ENCODE measurements at regions of chr6 and their contacts with region 1.

Region 1: DNA sequence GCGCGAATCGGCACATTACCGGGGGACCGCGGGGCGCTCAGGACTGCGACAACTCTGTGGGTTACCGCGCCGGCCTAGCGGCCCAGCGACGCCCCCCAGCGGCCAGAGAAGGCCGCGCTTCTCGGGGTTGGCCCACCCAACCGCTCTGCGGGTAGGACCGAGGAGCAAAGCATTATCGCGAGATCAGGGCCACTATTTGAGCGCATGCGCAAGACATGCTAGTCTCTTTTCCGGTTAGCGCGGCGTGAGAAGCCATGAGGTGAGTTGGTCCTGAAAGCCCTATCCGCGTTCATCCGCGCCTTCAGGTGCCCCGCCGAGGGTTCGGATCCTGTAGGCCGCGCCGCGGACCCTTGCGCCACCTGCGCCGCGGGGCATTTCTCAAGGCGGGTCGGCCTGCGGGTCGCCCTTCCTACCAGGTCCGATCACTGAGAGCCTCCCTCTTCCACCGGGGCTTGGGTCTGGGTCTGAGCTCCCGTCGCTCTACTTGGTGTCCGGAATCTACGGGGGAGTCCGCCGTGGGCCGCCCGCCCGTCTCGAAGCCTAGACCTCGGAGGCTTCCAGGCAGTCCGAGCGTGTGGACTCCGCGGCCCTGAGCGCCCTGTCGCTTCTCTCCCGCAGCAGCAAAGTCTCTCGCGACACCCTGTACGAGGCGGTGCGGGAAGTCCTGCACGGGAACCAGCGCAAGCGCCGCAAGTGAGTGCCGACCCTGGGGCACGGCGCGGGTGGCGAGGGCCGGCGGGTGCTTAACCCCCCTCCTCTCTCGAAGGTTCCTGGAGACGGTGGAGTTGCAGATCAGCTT is at the start of gene RPL10A:
- DNase-seq: peak; percentile 99
- H3K4me3 ChIP-seq: peak within 1 kb of the TSS; percentile 52 to 81 (median 66)
- H3K27ac ChIP-seq: peak within 1 kb of the TSS; percentile 81 to 93 (median 92)
- H3K4me1 ChIP-seq: peaks cover 0 to 46% (median 44%) of the 10 kb centered on the region in 4 donors
- H3K27me3 ChIP-seq: no peaks in the 10 kb centered on the region
- CTCF ChIP-seq: peak; percentile 93 to 98 (median 96)
- EP300 ChIP-seq: peak in 1 of 4 donors; percentile 2
- POLR2A ChIP-seq: peak; percentile 91 to 94
- total RNA-seq, gene RPL10A: 1,381 to 2,837 (median 2,184) TPM

Region 2: DNA sequence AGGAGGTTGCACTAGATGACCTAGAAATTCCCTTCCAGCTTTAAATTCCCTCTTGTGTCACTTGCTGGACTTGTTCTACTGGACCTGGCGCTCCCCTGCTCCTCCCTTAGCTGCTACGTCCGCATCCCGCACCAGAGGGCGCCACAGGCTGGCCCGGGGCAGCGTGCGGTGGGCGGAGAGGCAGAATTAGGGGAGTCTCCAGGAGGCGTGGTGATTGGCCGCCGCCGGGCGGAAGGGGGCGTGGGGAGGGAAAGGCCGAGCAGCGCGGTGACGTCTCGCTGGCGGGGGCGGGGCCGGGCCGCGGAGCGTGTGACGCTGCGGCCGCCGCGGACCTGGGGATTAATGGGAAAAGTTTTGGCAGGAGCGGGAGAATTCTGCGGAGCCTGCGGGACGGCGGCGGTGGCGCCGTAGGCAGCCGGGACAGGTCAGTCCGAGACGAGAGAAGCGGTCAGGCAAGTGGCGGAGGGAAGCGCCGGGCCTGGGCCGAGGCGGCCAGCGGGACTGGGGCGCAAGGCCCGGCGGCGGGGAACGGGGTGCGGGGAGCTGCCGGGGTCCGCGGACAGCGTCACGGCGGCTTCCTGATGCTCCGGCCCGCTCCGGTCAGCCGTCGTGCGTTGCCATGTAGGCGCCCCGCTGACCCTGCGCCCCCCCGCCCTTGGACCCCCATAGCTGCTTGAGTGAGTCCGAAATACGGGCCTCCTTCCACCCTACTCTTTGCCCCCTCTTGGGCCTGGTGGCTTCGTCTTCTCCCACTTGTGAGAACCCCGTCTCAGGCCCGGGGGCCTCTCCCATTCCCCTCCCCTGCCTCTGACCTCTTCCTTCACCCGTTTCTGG is 125.9 kb before region 1 on chr6 and contains the start of gene PPARD:
- intact Hi-C with region 1: loop called (anchors 1 kb)
- DNase-seq: peak; percentile 99
- H3K4me3 ChIP-seq: peak within 1 kb of the TSS; percentile 65 to 99 (median 72)
- H3K27ac ChIP-seq: peak within 1 kb of the TSS; percentile 86 to 95 (median 90)
- H3K4me1 ChIP-seq: peaks cover 0 to 37% (median 23%) of the 10 kb centered on the region in 4 donors
- H3K27me3 ChIP-seq: no peaks in the 10 kb centered on the region
- CTCF ChIP-seq: peak; percentile 94 to 100 (median 98)
- EP300 ChIP-seq: no peak
- POLR2A ChIP-seq: peak; percentile 67 to 80
- total RNA-seq, gene PPARD: 5.8 to 16.8 (median 8.5) TPM

Region 3: GRCh38 chr6:35452186-35453090 is 15.9 kb before region 1 on chr6 and contains the start of gene FANCE:
- intact Hi-C with region 1: loop called (anchors 2 kb)
- DNase-seq: peak; percentile 97
- H3K4me3 ChIP-seq: peak within 1 kb of the TSS; percentile 43 to 69 (median 64)
- H3K27ac ChIP-seq: peak within 1 kb of the TSS; percentile 74 to 77 (median 76)
- H3K4me1 ChIP-seq: peaks cover 0 to 23% (median 18%) of the 10 kb centered on the region in 4 donors
- H3K27me3 ChIP-seq: no peaks in the 10 kb centered on the region
- CTCF ChIP-seq: no peak
- EP300 ChIP-seq: no peak
- POLR2A ChIP-seq: peak in 1 of 2 donors; percentile 21
- total RNA-seq, gene FANCE: 3.3 to 3.9 (median 3.7) TPM

Region 4: GRCh38 chr6:35489995-35490733 is 21.8 kb after region 1 on chr6:
- intact Hi-C with region 1: loop called (anchors 2 kb)
- DNase-seq: peak; percentile 98
- H3K4me3 ChIP-seq: peak overlapping the region; percentile 19 to 99 (median 98)
- H3K27ac ChIP-seq: peak overlapping the region; percentile 100
- H3K4me1 ChIP-seq: peaks cover 0 to 100% (median 99%) of the 10 kb centered on the region in 4 donors
- H3K27me3 ChIP-seq: no peaks in the 10 kb centered on the region
- CTCF ChIP-seq: no peak
- EP300 ChIP-seq: peak in 2 of 4 donors; percentile 74 to 75
- POLR2A ChIP-seq: peak; percentile 8 to 39

Region 5: DNA sequence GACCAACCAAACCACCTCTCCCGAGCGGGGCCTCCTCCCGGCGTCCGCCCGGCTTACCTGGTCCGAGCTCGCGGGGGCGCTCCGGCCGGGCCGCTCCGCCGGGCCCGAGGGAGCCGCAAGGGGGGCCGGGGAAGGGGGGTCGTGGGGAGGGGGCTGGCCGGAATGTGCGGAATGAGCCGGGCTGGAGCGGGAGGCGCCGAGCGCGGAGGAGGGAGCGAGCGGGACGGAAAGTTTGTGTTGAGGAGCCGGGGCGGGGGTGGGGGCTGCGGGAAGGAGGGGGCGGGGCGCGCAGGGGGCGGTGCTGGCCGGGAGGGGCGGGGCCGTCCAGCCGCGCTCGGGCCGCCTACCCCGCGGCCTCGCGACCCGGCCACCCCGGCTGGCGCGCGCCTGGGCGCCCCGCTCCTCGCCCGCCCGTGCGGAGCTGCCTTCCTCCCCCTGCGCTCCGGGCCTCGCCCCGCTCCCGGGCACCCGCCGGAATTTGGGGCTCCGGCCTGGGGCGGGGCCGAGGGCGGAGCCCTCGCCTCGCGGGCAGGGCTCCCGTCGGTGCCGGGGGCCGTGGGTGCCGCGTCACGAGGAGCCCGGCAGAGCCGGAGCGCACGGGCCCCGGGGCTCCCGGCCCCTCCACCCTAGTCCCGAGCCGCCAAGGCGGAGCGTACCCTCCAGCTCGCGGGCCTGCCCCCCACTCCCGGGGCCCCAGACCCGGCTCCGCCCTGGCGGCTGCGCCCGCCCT is 28.6 kb after region 1 on chr6 and contains the start of gene TEAD3:
- intact Hi-C with region 1: loop called (anchors 1 kb)
- DNase-seq: peak; percentile 93
- H3K4me3 ChIP-seq: peak within 1 kb of the TSS; percentile 97 to 100 (median 98)
- H3K27ac ChIP-seq: peak within 1 kb of the TSS; percentile 100
- H3K4me1 ChIP-seq: peaks cover 0 to 56% (median 49%) of the 10 kb centered on the region in 4 donors
- H3K27me3 ChIP-seq: no peaks in the 10 kb centered on the region
- CTCF ChIP-seq: no peak
- EP300 ChIP-seq: no peak
- POLR2A ChIP-seq: peak in 1 of 2 donors; percentile 41
- total RNA-seq, gene TEAD3: 50.4 to 95.8 (median 74.8) TPM

Measured in sigmoid colon (tissue), 7 donors.